Activated CD8-positive, alpha-beta T cell treated with anti-CD3 and anti-CD28 coated beads for 36 hours (primary cell): ENCODE measurements at regions of chr2 and their contacts with region 1.

Region 1: GRCh38 chr2:201451292-201452057 is at the starts of genes STRADB and TRAK2:
- DNase-seq: peak; percentile 98
- ATAC-seq: peak; percentile 92
- H3K4me3 Mint-ChIP-seq: peak within 1 kb of the TSS; percentile 96
- H3K27ac Mint-ChIP-seq: peak within 1 kb of the TSS; percentile 97
- H3K4me1 Mint-ChIP-seq: peaks cover 42% of the 10 kb centered on the region
- H3K27me3 Mint-ChIP-seq: no peaks in the 10 kb centered on the region
- CTCF ChIP-seq: peak; percentile 45
- total RNA-seq, gene STRADB: 25.5 to 25.9 TPM
- total RNA-seq, gene TRAK2: 19.8 to 22.8 TPM

Region 2: GRCh38 chr2:201440182-201440581 is 11.3 kb before region 1 on chr2:
- CTCF ChIA-PET with region 1: interaction called, 11 read pairs
- POLR2A ChIA-PET with region 1: interaction called, 12 read pairs
- intact Hi-C with region 1: no loop called
- DNase-seq: no peak
- ATAC-seq: no peak
- H3K4me3 Mint-ChIP-seq: no peak overlapping the region
- H3K27ac Mint-ChIP-seq: no peak overlapping the region
- H3K4me1 Mint-ChIP-seq: peaks cover 8% of the 10 kb centered on the region
- H3K27me3 Mint-ChIP-seq: no peaks in the 10 kb centered on the region
- CTCF ChIP-seq: no peak

Region 3: DNA sequence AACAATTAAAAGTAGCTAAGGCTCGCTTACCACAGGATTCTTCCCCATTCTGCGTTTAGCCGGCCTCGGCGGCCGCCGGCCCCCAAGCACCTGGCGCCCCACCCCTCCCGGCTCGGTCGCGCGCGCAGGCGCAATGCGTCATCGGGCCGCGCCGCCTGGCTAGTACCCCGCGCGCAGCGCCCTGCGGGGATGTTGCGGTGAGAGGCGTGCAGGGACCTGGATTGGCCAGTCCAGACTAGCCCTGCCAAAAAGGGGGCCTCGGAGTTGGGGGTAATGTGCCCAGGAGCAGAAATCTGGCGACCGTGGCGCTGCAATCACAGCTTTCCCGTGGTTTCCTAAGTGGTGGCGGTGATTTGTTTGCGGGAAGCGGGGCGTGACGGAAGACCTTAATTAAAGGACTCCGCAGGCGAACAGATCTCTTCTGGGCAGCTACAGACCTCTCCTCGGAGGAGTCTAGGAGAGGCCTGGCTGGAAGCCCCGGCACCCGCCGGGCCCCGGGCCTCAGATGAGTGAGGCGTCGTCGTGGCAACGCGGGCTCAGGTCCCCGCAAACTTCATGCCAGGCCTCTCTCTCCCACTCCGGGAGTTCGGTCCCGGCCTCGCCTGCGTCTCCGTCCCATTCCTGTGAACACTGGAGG is 191.2 kb after region 1 on chr2:
- CTCF ChIA-PET with region 1: interaction called, 3 read pairs
- POLR2A ChIA-PET with region 1: interaction called, 4 read pairs
- intact Hi-C with region 1: loop called (anchors 10 kb)
- DNase-seq: peak; percentile 86
- ATAC-seq: peak; percentile 88
- H3K4me3 Mint-ChIP-seq: peak overlapping the region; percentile 82
- H3K27ac Mint-ChIP-seq: peak overlapping the region; percentile 88
- H3K4me1 Mint-ChIP-seq: peaks cover 11% of the 10 kb centered on the region
- H3K27me3 Mint-ChIP-seq: no peaks in the 10 kb centered on the region
- CTCF ChIP-seq: no peak